CD8-positive, alpha-beta T cell (primary cell): ENCODE measurements at regions of chr15 and their contacts with region 1.

Region 1: GRCh38 chr15:25693321-25694237 is 169.5 kb downstream of the ATP10A start:
- DNase-seq: peak in 4 of 9 experiments; percentile 26 to 39 (median 28)
- ATAC-seq: no peak
- H3K4me3 ChIP-seq: no peak overlapping the region
- H3K4me3 Mint-ChIP-seq: no peak overlapping the region
- H3K27ac ChIP-seq: no peak overlapping the region
- H3K27ac Mint-ChIP-seq: no peak overlapping the region
- H3K4me1 ChIP-seq: no peaks in the 10 kb centered on the region
- H3K4me1 Mint-ChIP-seq: no peaks in the 10 kb centered on the region
- H3K27me3 ChIP-seq: no peaks in the 10 kb centered on the region
- H3K27me3 Mint-ChIP-seq: no peaks in the 10 kb centered on the region
- CTCF ChIP-seq: peak; percentile 29

Region 2: DNA sequence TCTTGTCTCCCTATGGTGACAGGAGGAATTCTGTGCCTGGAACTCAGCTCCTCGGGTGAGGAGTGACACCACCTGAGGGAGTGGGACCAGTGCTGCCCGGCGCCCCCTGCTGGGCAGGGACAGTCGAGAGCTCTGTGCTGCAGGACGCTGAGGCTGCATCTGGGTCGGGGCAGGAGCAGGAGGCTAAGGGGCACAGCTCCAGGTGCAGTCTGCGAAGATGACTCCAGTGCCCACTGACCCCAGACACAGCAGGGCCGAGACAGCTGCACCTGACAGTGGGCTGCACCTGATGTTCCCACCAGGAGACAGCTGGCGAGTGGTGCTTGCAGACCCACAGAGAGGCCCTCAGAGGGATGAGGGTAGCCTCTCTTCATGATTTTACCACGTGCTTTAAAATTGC is 16.6 kb after region 1 on chr15:
- CTCF ChIA-PET with region 1: interaction called, 16 read pairs
- POLR2A ChIA-PET with region 1: no interaction called
- intact Hi-C with region 1: no loop called
- DNase-seq: peak in 7 of 9 experiments; percentile 24 to 71 (median 47)
- ATAC-seq: no peak
- H3K4me3 ChIP-seq: no peak overlapping the region
- H3K4me3 Mint-ChIP-seq: no peak overlapping the region
- H3K27ac ChIP-seq: no peak overlapping the region
- H3K27ac Mint-ChIP-seq: no peak overlapping the region
- H3K4me1 ChIP-seq: no peaks in the 10 kb centered on the region
- H3K4me1 Mint-ChIP-seq: no peaks in the 10 kb centered on the region
- H3K27me3 ChIP-seq: no peaks in the 10 kb centered on the region
- H3K27me3 Mint-ChIP-seq: no peaks in the 10 kb centered on the region
- CTCF ChIP-seq: peak; percentile 52